Activated T-helper 1 cell treated with anti-CD3 and anti-CD28 coated beads, Interleukin-12 subunit alpha, Interleukin-12 subunit beta, Interleukin-2, Interleukin-4 antibody, amounts not matched to agents 30 ng/mL and 10 ng/mL and 1 ng/mL, durations not matched to agents 14 hours and 24 hours and 36 hours (primary cell): ENCODE measurements at regions of chr9 and their contacts with region 1.

Region 1: DNA sequence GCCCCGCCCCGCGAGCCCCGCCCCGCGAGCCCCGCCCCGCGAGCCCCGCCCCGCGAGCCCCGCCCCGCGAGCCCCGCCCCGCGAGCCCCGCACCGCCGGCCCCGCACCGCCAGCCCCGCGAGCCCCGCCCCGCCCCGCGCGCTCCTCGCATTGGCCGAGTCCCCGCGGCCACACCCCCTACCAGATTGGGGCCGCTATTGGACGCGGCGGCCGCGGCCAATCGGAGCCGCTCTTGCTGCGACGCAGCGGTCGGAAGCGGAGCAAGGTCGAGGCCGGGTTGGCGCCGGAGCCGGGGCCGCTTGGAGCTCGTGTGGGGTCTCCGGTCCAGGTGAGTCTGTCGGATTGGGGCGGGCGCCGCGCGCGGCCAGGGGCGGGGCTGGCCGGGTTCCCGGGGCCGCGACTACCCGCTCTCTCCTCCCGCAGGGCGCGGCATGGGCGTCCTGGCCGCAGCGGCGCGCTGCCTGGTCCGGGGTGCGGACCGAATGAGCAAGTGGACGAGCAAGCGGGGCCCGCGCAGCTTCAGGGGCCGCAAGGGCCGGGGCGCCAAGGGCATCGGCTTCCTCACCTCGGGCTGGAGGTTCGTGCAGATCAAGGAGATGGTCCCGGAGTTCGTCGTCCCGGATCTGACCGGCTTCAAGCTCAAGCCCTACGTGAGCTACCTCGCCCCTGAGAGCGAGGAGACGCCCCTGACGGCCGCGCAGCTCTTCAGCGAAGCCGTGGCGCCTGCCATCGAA is at the start of gene MRPL41:
- DNase-seq: peak; percentile 92
- H3K4me3 Mint-ChIP-seq: peak within 1 kb of the TSS; percentile 91
- H3K27ac Mint-ChIP-seq: peak within 1 kb of the TSS; percentile 82
- H3K4me1 Mint-ChIP-seq: peaks cover 14% of the 10 kb centered on the region
- H3K27me3 Mint-ChIP-seq: peaks cover 3% of the 10 kb centered on the region
- total RNA-seq, gene MRPL41: 53.8 and 56.0 TPM in 2 replicates

Region 2: GRCh38 chr9:137086531-137087408 is 465.0 kb before region 1 on chr9 and contains the start of gene MAN1B1:
- intact Hi-C with region 1: loop called (anchors 1 kb)
- DNase-seq: peak; percentile 100
- H3K4me3 Mint-ChIP-seq: peak within 1 kb of the TSS; percentile 88
- H3K27ac Mint-ChIP-seq: peak within 1 kb of the TSS; percentile 94
- H3K4me1 Mint-ChIP-seq: peaks cover 33% of the 10 kb centered on the region
- H3K27me3 Mint-ChIP-seq: no peaks in the 10 kb centered on the region
- total RNA-seq, gene MAN1B1: 48.1 and 53.6 TPM in 2 replicates

Region 3: GRCh38 chr9:137240861-137241489 is 310.8 kb before region 1 on chr9 and contains the start of gene TUBB4B:
- intact Hi-C with region 1: loop called (anchors 1 kb)
- DNase-seq: peak; percentile 98
- H3K4me3 Mint-ChIP-seq: peak within 1 kb of the TSS; percentile 92
- H3K27ac Mint-ChIP-seq: peak within 1 kb of the TSS; percentile 91
- H3K4me1 Mint-ChIP-seq: peaks cover 22% of the 10 kb centered on the region
- H3K27me3 Mint-ChIP-seq: no peaks in the 10 kb centered on the region
- total RNA-seq, gene TUBB4B: 277 and 280 TPM in 2 replicates

Region 4: GRCh38 chr9:137423004-137423874 is 128.6 kb before region 1 on chr9 and contains the starts of genes EXD3 and NOXA1:
- intact Hi-C with region 1: loop called (anchors 5 kb)
- DNase-seq: peak; percentile 92
- H3K4me3 Mint-ChIP-seq: peak within 1 kb of the TSS; percentile 90
- H3K27ac Mint-ChIP-seq: peak within 1 kb of the TSS; percentile 52
- H3K4me1 Mint-ChIP-seq: peaks cover 7% of the 10 kb centered on the region
- H3K27me3 Mint-ChIP-seq: peaks cover 9% of the 10 kb centered on the region
- total RNA-seq, gene EXD3: 4.8 and 4.9 TPM in 2 replicates
- total RNA-seq, gene NOXA1: 0.49 and 0.54 TPM in 2 replicates

Region 5: GRCh38 chr9:137492464-137493162 is 59.2 kb before region 1 on chr9:
- intact Hi-C with region 1: loop called (anchors 1 kb)
- DNase-seq: peak; percentile 8
- H3K4me3 Mint-ChIP-seq: no peak overlapping the region
- H3K27ac Mint-ChIP-seq: no peak overlapping the region
- H3K4me1 Mint-ChIP-seq: no peaks in the 10 kb centered on the region
- H3K27me3 Mint-ChIP-seq: no peaks in the 10 kb centered on the region

Region 6: GRCh38 chr9:137578518-137579258 is 26.9 kb after region 1 on chr9 and contains the start of gene DPH7:
- intact Hi-C with region 1: loop called (anchors 2 kb)
- DNase-seq: peak; percentile 93
- H3K4me3 Mint-ChIP-seq: peak within 1 kb of the TSS; percentile 88
- H3K27ac Mint-ChIP-seq: peak within 1 kb of the TSS; percentile 58
- H3K4me1 Mint-ChIP-seq: peaks cover 32% of the 10 kb centered on the region
- H3K27me3 Mint-ChIP-seq: no peaks in the 10 kb centered on the region
- total RNA-seq, gene DPH7: 50.3 and 52.1 TPM in 2 replicates

Region 7: GRCh38 chr9:137605121-137606004 is 53.5 kb after region 1 on chr9 and contains the start of gene ARRDC1:
- intact Hi-C with region 1: loop called (anchors 1 kb)
- DNase-seq: peak; percentile 85
- H3K4me3 Mint-ChIP-seq: peak within 1 kb of the TSS; percentile 85
- H3K27ac Mint-ChIP-seq: peak within 1 kb of the TSS; percentile 74
- H3K4me1 Mint-ChIP-seq: peaks cover 20% of the 10 kb centered on the region
- H3K27me3 Mint-ChIP-seq: peaks cover 6% of the 10 kb centered on the region
- total RNA-seq, gene ARRDC1: 65.7 and 70.3 TPM in 2 replicates